ENCODE measurements at regions of chr6 and their contacts with region 1.

Region 1: GRCh38 chr6:109292420-109292819 is 89.8 kb downstream of the CD164 start:
- DNase-seq: no peak
- H3K4me3 ChIP-seq: no peak overlapping the region
- H3K4me3 Mint-ChIP-seq: no peak overlapping the region
- H3K27ac ChIP-seq: no peak overlapping the region
- H3K27ac Mint-ChIP-seq: peak overlapping the region in 1 of 7 donors; percentile 50
- H3K4me1 ChIP-seq: peaks cover 5% of the 10 kb centered on the region in 2 donors
- H3K4me1 Mint-ChIP-seq: peaks cover 20% of the 10 kb centered on the region
- H3K27me3 ChIP-seq: no peaks in the 10 kb centered on the region
- H3K27me3 Mint-ChIP-seq: peaks cover 4 to 11% (median 7%) of the 10 kb centered on the region in 3 donors
- CTCF ChIP-seq: no peak

Region 2: GRCh38 chr6:109002051-109002697 is 290.2 kb before region 1 on chr6:
- intact Hi-C with region 1: no loop called
- DNase-seq: no peak
- H3K4me3 ChIP-seq: no peak overlapping the region
- H3K4me3 Mint-ChIP-seq: no peak overlapping the region
- H3K27ac ChIP-seq: no peak overlapping the region
- H3K27ac Mint-ChIP-seq: no peak overlapping the region
- H3K4me1 ChIP-seq: no peaks in the 10 kb centered on the region
- H3K4me1 Mint-ChIP-seq: peaks cover 5% of the 10 kb centered on the region
- H3K27me3 ChIP-seq: no peaks in the 10 kb centered on the region
- H3K27me3 Mint-ChIP-seq: peaks cover 0 to 1% (median 0%) of the 10 kb centered on the region in 3 donors
- CTCF ChIP-seq: no peak

Region 3: DNA sequence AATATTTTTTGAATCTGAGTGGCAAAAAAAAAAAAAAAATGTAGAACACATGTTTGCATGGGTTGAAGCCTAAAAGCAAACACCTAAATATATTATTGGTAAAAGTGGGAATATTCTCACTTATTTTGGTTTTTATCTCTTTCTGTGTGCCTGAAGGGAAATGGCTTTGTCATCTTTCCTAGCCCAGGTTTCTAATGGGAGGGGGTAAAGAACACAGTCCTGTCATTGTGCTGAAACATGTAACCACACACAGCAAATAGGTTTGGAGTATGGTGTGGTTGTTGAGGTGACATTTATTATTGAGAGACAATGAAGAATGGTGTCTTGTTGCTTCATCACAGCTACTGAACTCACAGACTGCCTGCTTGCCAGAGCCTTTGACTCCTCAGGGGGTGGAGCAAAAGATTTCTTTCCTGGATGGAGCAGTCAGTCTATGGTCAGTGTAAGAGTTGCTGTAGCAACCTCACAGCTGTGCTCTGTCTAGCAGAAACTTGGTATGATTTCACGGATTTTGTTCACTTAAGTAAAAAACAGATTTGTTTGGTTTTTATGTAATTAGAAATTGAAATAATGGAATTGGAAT is 126.9 kb before region 1 on chr6:
- intact Hi-C with region 1: no loop called
- DNase-seq: no peak
- H3K4me3 ChIP-seq: no peak overlapping the region
- H3K4me3 Mint-ChIP-seq: no peak overlapping the region
- H3K27ac ChIP-seq: no peak overlapping the region
- H3K27ac Mint-ChIP-seq: no peak overlapping the region
- H3K4me1 ChIP-seq: no peaks in the 10 kb centered on the region
- H3K4me1 Mint-ChIP-seq: peaks cover 4% of the 10 kb centered on the region
- H3K27me3 ChIP-seq: no peaks in the 10 kb centered on the region
- H3K27me3 Mint-ChIP-seq: peaks cover 0 to 1% (median 0%) of the 10 kb centered on the region in 3 donors
- CTCF ChIP-seq: no peak

Region 4: DNA sequence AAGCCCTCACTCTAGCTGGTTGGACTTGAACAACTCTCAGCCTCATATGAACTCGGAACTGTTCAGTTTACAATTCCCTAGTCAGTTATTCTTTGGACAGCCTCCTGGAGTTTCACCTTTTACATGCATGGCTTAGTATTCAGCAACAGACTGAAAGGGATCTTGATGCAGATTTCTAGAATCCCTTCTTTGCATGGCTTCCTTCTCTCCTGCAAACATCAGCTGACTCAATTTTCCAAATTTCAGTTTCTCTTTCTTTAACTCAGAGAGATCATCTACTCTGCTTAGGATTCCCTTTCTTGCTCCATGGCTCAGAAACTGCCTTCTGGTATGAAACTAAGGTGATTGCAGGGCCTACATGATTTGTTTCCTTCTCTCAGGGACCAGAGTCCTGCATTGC is 97.5 kb before region 1 on chr6:
- intact Hi-C with region 1: loop called in 1 of 2 experiments (anchors 5 kb)
- DNase-seq: no peak
- H3K4me3 ChIP-seq: no peak overlapping the region
- H3K4me3 Mint-ChIP-seq: peak overlapping the region in 1 of 2 donors; percentile 11
- H3K27ac ChIP-seq: no peak overlapping the region
- H3K27ac Mint-ChIP-seq: peak overlapping the region in 1 of 7 donors; percentile 1
- H3K4me1 ChIP-seq: peaks cover 5% of the 10 kb centered on the region in 2 donors
- H3K4me1 Mint-ChIP-seq: peaks cover 7% of the 10 kb centered on the region
- H3K27me3 ChIP-seq: no peaks in the 10 kb centered on the region
- H3K27me3 Mint-ChIP-seq: peaks cover 0 to 5% (median 0%) of the 10 kb centered on the region in 3 donors
- CTCF ChIP-seq: no peak

Region 5: DNA sequence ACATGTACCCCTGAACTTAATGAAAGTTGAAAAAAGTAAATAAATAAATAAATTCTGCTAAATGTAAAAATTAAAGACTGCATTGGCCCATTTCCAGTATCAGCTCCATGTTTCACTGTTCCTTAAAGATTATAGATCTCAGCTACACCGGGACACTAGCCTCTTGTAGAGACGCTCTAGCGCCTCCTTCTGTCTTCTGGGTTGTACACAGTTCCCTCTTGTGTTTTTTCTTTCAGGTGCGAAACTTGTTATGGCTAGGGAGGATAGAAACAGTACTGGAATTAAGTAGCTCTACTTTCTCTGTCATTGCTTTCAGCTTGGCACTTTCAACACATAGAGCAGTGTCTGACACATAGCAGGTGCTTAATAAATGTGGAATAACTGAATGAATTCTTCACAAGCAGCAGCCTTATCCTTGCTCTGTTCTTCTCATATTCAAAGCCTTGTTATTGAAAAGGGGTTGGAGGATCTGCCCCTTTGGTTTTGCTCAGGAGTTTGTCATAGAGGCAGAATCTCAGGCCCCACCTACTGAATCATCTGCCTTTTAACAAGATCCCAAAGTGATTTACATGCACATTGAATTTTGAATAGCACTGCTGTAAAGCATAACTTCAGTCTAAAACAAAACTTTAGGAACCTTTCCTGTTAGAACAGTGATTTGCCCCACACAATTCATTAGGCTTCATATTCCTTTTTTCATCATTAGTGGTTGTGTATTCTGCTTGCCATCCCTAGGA is 491.0 kb after region 1 on chr6:
- intact Hi-C with region 1: no loop called
- DNase-seq: peak; percentile 16 to 55 (median 39)
- H3K4me3 ChIP-seq: no peak overlapping the region
- H3K4me3 Mint-ChIP-seq: no peak overlapping the region
- H3K27ac ChIP-seq: no peak overlapping the region
- H3K27ac Mint-ChIP-seq: no peak overlapping the region
- H3K4me1 ChIP-seq: peaks cover 0 to 6% of the 10 kb centered on the region in 2 donors
- H3K4me1 Mint-ChIP-seq: peaks cover 4% of the 10 kb centered on the region
- H3K27me3 ChIP-seq: no peaks in the 10 kb centered on the region
- H3K27me3 Mint-ChIP-seq: no peaks in the 10 kb centered on the region
- CTCF ChIP-seq: peak; percentile 65